ENCODE measurements at regions of chr11 and their contacts with region 1.

Region 1: GRCh38 chr11:95266751-95267374 is 35.9 kb upstream of the SESN3 start:
- DNase-seq: peak; percentile 19 to 34
- ATAC-seq: peak; percentile 83 to 92
- H3K4me3 ChIP-seq: no peak overlapping the region
- H3K27ac ChIP-seq: peak overlapping the region; percentile 47 to 59 (median 51)
- H3K4me1 ChIP-seq: no peaks in the 10 kb centered on the region
- H3K27me3 ChIP-seq: no peaks in the 10 kb centered on the region
- CTCF ChIP-seq: no peak
- POLR2A ChIP-seq: no peak

Region 2: DNA sequence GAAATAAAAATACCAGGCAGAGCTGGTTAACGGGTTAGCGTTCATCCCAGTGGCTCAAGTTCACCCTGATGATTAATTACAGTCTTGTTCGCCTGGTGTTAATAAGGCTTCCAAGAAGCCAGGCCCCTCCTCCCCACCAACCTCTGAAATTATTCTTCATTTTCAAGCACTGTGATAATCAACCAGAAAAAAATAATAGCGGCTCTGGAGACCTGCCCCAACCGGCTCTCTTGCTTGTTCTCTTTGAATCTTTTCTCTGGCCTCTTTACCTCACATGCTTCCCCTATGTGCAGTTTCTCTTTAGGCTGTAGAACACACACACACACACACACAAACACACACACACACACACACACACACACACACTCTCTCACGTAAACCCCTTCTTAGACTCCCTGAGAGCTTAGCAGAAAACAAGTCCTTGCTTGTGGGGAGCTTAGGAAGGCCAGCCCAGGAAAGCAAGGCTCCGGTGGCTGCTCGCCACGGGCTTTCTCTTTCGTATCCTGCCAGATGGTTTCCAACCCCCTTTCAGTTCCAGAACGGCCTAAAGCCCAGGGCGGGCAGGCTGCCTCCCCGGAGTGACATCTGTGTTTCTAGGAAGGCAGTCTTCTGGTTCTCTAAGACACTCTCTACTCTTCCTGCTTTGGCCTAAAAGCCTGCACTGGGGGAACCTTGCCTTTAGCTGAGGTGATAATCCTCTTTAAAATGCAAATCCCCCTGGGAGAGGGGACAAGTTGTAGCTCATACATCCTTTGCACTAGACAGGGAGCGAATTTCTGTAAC is 70.5 kb after region 1 on chr11:
- in situ Hi-C with region 1: no loop called
- intact Hi-C with region 1: loop called (anchors 2 kb)
- DNase-seq: peak; percentile 14 to 54
- ATAC-seq: peak; percentile 58 to 61
- H3K4me3 ChIP-seq: peak overlapping the region in 2 of 4 donors; percentile 14 to 16
- H3K27ac ChIP-seq: peak overlapping the region; percentile 69 to 80 (median 77)
- H3K4me1 ChIP-seq: peaks cover 36 to 37% of the 10 kb centered on the region in 2 donors
- H3K27me3 ChIP-seq: no peaks in the 10 kb centered on the region
- CTCF ChIP-seq: no peak
- POLR2A ChIP-seq: no peak

Region 3: DNA sequence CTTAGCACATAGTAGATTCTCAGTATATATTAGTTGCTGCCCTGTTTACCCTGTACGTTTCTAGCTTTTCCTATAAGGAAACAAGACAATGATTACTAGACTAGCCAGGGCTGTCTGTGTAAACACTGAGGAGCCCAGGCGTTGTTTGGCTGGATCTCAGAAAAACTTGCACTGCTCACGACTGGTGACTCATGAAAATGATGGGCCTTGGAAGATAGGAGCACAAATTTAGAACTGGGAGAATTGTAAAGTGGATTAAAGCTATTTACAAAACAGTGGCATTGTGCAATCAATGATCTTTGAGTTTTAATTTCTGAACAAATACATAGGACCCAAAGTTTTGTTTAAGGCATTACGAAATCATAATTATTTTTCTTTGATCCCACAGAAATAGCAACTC is 245.8 kb after region 1 on chr11:
- in situ Hi-C with region 1: loop called in 1 of 4 experiments (anchors 10 kb)
- intact Hi-C with region 1: no loop called
- DNase-seq: peak; percentile 25 to 41
- ATAC-seq: peak; percentile 69 to 72
- H3K4me3 ChIP-seq: no peak overlapping the region
- H3K27ac ChIP-seq: peak overlapping the region; percentile 14 to 67 (median 38)
- H3K4me1 ChIP-seq: peaks cover 0 to 7% of the 10 kb centered on the region in 2 donors
- H3K27me3 ChIP-seq: no peaks in the 10 kb centered on the region
- CTCF ChIP-seq: no peak
- POLR2A ChIP-seq: no peak